B cell (primary cell): ENCODE measurements at regions of chr16 and their contacts with region 1.

Region 1: DNA sequence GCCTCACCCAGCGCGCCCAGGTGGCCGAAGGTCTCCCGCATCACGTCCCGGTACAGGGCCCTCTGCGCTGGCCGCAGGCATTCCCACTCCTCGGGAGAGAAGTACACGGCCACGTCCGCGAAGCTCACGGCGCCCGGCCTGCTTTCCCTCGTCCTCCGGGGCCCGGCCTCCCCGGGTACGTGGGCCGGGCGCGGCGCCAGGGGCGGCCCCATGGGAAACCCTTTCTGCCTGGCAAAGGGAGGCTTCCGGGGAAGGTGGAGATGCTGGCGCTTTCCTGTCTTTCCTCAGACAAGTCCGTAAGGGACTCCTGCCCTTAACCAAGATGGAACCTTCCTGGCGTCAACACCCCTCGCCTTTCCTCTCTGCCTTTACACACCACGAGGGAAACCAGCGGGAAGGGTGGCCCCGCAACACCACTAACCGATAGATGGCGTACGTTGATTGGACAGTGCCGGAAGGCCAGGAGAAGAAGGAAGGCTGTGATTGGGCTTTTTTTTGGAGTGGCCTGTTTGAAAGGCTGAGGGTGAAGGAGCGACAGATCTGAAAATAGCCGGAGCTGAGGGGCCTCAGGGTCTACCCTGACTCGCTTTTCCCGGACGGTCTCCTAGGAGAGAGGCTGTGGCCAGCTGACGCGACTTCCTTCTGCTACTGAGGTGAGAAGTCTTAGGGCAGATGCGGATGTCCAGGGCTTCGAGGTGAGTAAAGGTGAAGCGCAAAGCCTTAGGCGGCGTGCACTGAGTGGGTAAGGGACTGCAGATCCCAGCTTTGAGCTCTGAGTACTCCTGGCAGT is at the start of gene ZNF785:
- DNase-seq: peak; percentile 95
- ATAC-seq: peak; percentile 99
- H3K4me3 ChIP-seq: peak within 1 kb of the TSS; percentile 56 to 89 (median 75)
- H3K4me3 Mint-ChIP-seq: peak within 1 kb of the TSS; percentile 85
- H3K27ac ChIP-seq: peak within 1 kb of the TSS; percentile 29 to 82
- H3K27ac Mint-ChIP-seq: peak within 1 kb of the TSS; percentile 71
- H3K4me1 ChIP-seq: peaks cover 8 to 21% of the 10 kb centered on the region in 2 donors
- H3K4me1 Mint-ChIP-seq: peaks cover 22% of the 10 kb centered on the region
- H3K27me3 ChIP-seq: no peaks in the 10 kb centered on the region
- H3K27me3 Mint-ChIP-seq: no peaks in the 10 kb centered on the region
- CTCF ChIP-seq: no peak
- total RNA-seq, gene ZNF785: 39.7 and 44.6 TPM in 2 replicates

Region 2: DNA sequence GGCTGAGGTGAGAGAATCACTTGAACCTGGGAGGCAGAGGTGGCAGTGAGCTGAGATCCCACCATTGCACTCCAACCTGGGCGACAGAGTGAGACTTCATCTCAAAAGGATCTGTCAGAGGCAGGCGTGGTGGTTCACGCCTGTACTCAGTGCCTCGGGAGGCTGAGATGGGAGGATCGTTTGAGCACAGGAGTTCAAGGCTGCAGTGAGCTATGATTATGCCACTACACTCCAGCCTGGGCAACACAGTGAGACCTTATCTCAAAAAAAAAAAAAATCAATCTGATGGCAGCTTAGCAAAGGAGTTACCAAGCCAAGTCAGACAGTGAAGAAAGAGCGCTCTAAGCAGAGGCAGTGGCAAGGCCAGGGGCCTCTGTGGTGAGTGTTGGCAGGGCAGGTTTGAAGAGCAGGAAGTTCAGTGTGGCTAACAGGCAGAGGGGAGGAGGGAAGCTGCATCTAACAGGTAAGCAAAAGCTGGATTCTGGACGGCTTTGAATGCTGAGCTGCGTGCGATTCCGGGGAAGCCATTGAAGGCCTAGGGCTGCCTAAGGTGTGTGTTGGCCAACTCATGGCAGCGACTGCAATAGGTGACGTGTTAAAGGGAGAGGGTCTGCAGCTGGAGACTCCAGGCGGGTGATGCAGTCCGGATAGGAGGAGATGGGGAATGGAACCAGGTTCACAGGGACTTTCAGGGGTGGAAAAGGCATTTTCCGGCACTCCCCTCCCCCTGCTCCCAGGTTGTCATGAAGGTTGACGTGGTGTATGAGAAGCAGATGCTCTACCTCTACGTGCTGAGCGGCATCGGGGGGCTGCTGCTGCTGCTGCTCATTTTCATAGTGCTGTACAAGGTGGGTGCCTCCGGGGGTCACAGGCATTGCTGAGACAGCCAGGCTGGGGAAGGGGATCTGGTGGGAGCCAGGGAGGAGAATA is 66.2 kb before region 1 on chr16:
- CTCF ChIA-PET with region 1: no interaction called
- POLR2A ChIA-PET with region 1: no interaction called
- intact Hi-C with region 1: no loop called
- DNase-seq: no peak
- ATAC-seq: no peak
- H3K4me3 ChIP-seq: no peak overlapping the region
- H3K4me3 Mint-ChIP-seq: no peak overlapping the region
- H3K27ac ChIP-seq: no peak overlapping the region
- H3K27ac Mint-ChIP-seq: no peak overlapping the region
- H3K4me1 ChIP-seq: no peaks in the 10 kb centered on the region
- H3K4me1 Mint-ChIP-seq: no peaks in the 10 kb centered on the region
- H3K27me3 ChIP-seq: no peaks in the 10 kb centered on the region
- H3K27me3 Mint-ChIP-seq: no peaks in the 10 kb centered on the region
- CTCF ChIP-seq: no peak

Region 3: DNA sequence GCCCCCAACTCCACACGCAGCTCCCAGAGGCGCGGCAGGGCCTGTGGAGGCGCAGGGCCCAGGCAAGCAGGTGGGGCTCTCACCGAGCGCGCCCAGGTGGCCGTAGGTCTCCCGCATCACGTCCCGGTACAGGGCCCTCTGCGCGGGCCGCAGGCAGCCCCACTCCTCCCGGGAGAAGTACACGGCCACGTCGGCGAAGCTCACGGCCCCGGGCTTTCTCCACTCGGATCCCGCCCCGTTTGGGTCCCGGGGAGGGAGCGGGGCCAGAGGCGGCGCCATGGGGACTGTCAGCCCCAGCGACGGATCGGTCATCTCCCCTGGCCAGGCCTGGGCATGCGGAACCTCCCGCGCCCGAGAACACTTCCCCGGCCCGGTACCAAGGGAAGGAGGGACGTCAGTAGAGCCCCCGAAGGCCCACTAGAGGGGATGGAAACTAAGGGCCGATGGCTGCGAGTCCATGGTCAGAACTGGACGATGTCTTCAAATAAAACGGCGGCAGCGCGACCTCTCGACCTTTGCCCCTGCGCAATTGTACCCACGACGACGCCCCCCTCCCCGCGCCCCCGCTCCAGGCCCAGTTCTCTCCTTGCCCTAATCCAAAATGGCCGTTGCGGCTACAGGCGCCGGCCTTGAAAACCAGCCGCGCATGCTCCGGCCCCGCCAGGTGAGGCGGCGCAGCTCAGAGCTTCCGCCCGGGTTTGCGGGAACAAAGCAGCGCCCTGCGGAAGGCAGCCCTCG is 51.1 kb before region 1 on chr16 and contains the start of gene ZNF747:
- CTCF ChIA-PET with region 1: interaction called, 12 read pairs
- POLR2A ChIA-PET with region 1: no interaction called
- intact Hi-C with region 1: loop called (anchors 1 kb)
- DNase-seq: peak; percentile 93
- ATAC-seq: peak; percentile 82
- H3K4me3 ChIP-seq: peak within 1 kb of the TSS; percentile 80 to 93 (median 88)
- H3K4me3 Mint-ChIP-seq: peak within 1 kb of the TSS; percentile 98
- H3K27ac ChIP-seq: peak within 1 kb of the TSS; percentile 89 to 94
- H3K27ac Mint-ChIP-seq: peak within 1 kb of the TSS; percentile 94
- H3K4me1 ChIP-seq: peaks cover 8 to 23% of the 10 kb centered on the region in 2 donors
- H3K4me1 Mint-ChIP-seq: peaks cover 33% of the 10 kb centered on the region
- H3K27me3 ChIP-seq: no peaks in the 10 kb centered on the region
- H3K27me3 Mint-ChIP-seq: no peaks in the 10 kb centered on the region
- CTCF ChIP-seq: no peak
- total RNA-seq, gene ZNF747: 17.3 and 27.1 TPM in 2 replicates

Region 4: GRCh38 chr16:30546115-30546514 is 39.5 kb before region 1 on chr16:
- CTCF ChIA-PET with region 1: no interaction called
- POLR2A ChIA-PET with region 1: no interaction called
- intact Hi-C with region 1: no loop called
- DNase-seq: no peak
- ATAC-seq: no peak
- H3K4me3 ChIP-seq: no peak overlapping the region
- H3K4me3 Mint-ChIP-seq: no peak overlapping the region
- H3K27ac ChIP-seq: no peak overlapping the region
- H3K27ac Mint-ChIP-seq: no peak overlapping the region
- H3K4me1 ChIP-seq: no peaks in the 10 kb centered on the region
- H3K4me1 Mint-ChIP-seq: no peaks in the 10 kb centered on the region
- H3K27me3 ChIP-seq: no peaks in the 10 kb centered on the region
- H3K27me3 Mint-ChIP-seq: no peaks in the 10 kb centered on the region
- CTCF ChIP-seq: no peak

Region 5: DNA sequence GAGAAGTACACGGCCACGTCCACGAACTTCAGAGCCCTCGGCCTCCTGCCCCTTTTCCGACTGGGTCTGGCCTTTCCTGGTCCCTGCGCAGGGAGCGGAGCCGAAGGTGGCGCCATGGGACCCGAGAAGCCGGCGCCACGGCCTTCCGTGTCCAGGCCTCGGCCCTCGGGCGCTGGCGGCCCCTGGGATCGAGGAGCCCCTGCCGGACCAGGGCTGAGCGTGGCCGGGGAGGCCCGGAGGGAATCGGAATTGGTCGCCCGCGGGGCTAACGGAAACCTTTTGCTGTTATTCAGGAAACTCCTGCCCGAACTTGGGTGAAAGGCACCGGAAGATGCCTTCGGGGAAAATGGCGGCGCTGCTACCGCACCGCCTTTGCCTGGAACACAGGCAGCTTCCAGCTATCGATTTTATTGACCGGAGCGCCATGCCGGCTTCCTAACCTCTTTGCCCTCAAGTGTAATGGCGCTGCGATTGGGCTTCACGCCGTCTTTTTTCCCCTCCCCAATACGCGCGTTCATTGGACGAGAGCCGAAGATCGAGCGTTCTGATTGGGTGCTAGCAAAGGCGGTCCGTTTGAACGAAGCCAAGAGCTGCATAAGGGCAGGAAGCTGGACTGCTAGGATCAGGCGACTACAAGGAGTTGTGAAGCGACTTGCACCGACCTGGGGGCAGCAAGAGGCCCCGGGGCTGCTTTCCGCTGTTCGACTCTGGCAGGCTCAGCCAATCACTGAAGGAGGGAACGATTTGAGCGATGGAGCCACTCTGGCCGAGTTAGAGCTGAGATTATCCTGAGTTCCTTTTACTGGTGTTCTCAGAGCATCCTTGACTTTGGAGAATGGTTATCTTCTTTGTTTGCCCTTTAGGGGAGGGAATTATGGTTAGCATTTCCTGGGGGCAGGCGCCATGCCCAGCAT is 24.6 kb after region 1 on chr16 and contains the start of gene ZNF689:
- CTCF ChIA-PET with region 1: interaction called, 4 read pairs
- POLR2A ChIA-PET with region 1: interaction called, 3 read pairs
- intact Hi-C with region 1: loop called (anchors 1 kb)
- DNase-seq: peak; percentile 97
- ATAC-seq: peak; percentile 88
- H3K4me3 ChIP-seq: peak within 1 kb of the TSS; percentile 84 to 98 (median 91)
- H3K4me3 Mint-ChIP-seq: peak within 1 kb of the TSS; percentile 98
- H3K27ac ChIP-seq: peak within 1 kb of the TSS; percentile 82 to 96
- H3K27ac Mint-ChIP-seq: peak within 1 kb of the TSS; percentile 96
- H3K4me1 ChIP-seq: peaks cover 14 to 24% of the 10 kb centered on the region in 2 donors
- H3K4me1 Mint-ChIP-seq: peaks cover 21% of the 10 kb centered on the region
- H3K27me3 ChIP-seq: no peaks in the 10 kb centered on the region
- H3K27me3 Mint-ChIP-seq: no peaks in the 10 kb centered on the region
- CTCF ChIP-seq: no peak
- total RNA-seq, gene ZNF689: 11.9 and 12.4 TPM in 2 replicates

Region 6: GRCh38 chr16:30650369-30651123 is 65.0 kb after region 1 on chr16 and contains the start of gene PRR14:
- CTCF ChIA-PET with region 1: no interaction called
- POLR2A ChIA-PET with region 1: no interaction called
- intact Hi-C with region 1: no loop called
- DNase-seq: peak; percentile 99
- ATAC-seq: peak; percentile 76
- H3K4me3 ChIP-seq: peak within 1 kb of the TSS; percentile 62 to 100 (median 93)
- H3K4me3 Mint-ChIP-seq: peak within 1 kb of the TSS; percentile 91
- H3K27ac ChIP-seq: peak within 1 kb of the TSS; percentile 97 to 98
- H3K27ac Mint-ChIP-seq: peak within 1 kb of the TSS; percentile 96
- H3K4me1 ChIP-seq: peaks cover 9 to 21% of the 10 kb centered on the region in 2 donors
- H3K4me1 Mint-ChIP-seq: peaks cover 19% of the 10 kb centered on the region
- H3K27me3 ChIP-seq: no peaks in the 10 kb centered on the region
- H3K27me3 Mint-ChIP-seq: no peaks in the 10 kb centered on the region
- CTCF ChIP-seq: no peak
- total RNA-seq, gene PRR14: 92.7 and 95.8 TPM in 2 replicates

Region 7: DNA sequence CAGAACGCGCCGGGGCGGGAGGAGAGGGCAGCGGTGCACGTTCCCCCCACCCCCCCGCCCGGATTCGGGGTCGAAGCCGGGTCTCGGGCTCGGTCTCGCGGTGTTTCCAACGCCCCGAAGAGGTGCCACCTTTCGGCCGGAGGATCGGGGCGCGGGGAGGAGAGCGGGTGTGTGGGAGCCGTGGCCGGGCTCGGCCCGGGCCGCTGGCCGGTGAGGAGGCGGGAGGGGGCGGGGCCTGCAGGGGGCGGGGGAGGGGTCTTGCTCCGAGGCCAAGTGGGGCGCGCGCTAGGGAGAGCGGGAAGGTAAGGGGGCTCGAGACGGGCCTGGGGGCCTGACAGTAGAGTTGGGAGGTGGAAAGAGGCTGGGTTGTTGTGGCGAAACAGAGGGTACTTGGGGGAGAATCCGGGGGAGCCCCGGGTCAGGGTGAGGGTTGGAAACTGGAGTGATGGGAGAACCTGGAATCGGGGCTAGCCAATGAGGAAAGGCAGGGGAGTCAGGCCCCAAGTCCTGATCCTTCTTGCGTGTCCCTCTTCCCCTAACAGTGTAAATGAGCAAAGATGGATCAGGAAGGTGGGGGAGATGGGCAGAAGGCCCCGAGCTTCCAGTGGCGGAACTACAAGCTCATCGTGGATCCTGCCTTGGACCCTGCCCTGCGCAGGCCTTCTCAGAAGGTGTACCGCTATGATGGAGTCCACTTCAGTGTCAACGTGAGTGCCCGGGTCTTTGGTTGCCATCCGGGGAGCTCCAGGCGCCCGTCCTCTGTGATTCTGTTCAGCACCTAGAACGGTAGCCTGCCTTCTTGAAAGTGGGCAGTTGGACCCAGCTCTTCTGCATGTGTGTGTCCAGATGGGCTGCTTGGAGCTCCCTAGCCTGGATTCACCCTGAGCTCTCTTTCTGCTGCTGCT is 372.8 kb after region 1 on chr16:
- CTCF ChIA-PET with region 1: no interaction called
- POLR2A ChIA-PET with region 1: no interaction called
- intact Hi-C with region 1: no loop called
- DNase-seq: peak; percentile 39
- ATAC-seq: peak; percentile 23
- H3K4me3 ChIP-seq: peak overlapping the region; percentile 30 to 99 (median 92)
- H3K4me3 Mint-ChIP-seq: peak overlapping the region; percentile 85
- H3K27ac ChIP-seq: peak overlapping the region; percentile 34 to 60
- H3K27ac Mint-ChIP-seq: peak overlapping the region; percentile 91
- H3K4me1 ChIP-seq: peaks cover 15 to 24% of the 10 kb centered on the region in 2 donors
- H3K4me1 Mint-ChIP-seq: peaks cover 39% of the 10 kb centered on the region
- H3K27me3 ChIP-seq: no peaks in the 10 kb centered on the region
- H3K27me3 Mint-ChIP-seq: no peaks in the 10 kb centered on the region
- CTCF ChIP-seq: no peak